Esophagus muscularis mucosa (tissue), 4 donors: ENCODE measurements at regions of chr1 and their contacts with region 1.

Region 1: DNA sequence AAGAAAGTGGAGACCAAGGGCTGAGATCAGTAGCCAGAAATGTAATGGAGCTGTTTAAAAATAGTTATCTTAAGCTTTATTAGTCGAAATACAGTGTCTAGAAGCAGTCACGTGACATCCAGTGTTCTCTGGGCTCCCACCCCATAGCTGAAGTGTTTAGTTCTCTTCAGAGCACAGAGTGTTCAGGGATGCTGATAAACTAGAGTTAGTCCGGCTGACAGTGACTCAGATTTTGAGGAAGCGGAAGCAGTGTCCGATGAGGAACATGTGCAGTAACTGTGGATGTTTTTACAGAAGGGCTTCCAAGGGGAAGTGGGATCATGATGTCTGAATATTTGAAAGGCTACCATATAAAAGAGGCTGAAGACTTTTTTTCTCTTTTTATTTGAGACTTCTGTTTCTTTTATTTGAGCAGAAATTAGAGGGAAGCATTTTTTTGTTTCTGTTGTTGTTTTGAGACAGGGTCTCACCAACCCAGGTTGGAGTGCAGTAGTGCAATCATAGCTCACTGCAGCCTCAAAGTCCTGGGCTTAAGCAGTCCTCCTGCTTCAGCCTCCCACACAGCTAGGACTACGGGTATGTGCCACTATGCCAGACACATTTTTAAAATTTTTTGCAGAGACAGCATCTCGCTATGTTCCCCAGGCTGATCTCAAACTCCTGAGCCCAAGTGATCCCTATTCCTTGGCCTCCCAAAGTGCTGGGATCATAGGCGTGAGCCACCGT is 124.2 kb downstream of the GALNT2 start:
- DNase-seq: peak; percentile 94
- H3K4me3 ChIP-seq: no peak overlapping the region
- H3K27ac ChIP-seq: peak overlapping the region; percentile 75 to 83 (median 78)
- H3K4me1 ChIP-seq: peaks cover 25 to 85% (median 77%) of the 10 kb centered on the region in 4 donors
- H3K27me3 ChIP-seq: no peaks in the 10 kb centered on the region
- CTCF ChIP-seq: peak in 1 of 3 experiments; percentile 14
- EP300 ChIP-seq: peak; percentile 77
- POLR2A ChIP-seq: no peak

Region 2: GRCh38 chr1:230104395-230105244 is 86.6 kb before region 1 on chr1:
- intact Hi-C with region 1: loop called (anchors 5 kb)
- DNase-seq: peak; percentile 98
- H3K4me3 ChIP-seq: peak overlapping the region; percentile 17 to 39 (median 22)
- H3K27ac ChIP-seq: peak overlapping the region; percentile 82 to 87 (median 83)
- H3K4me1 ChIP-seq: peaks cover 53 to 100% (median 91%) of the 10 kb centered on the region in 4 donors
- H3K27me3 ChIP-seq: no peaks in the 10 kb centered on the region
- CTCF ChIP-seq: peak in 2 of 3 experiments; percentile 3 to 8
- EP300 ChIP-seq: peak; percentile 90
- POLR2A ChIP-seq: no peak